Transverse colon (tissue), 4 donors: ENCODE measurements at regions of chr12 and their contacts with region 1.

Region 1: DNA sequence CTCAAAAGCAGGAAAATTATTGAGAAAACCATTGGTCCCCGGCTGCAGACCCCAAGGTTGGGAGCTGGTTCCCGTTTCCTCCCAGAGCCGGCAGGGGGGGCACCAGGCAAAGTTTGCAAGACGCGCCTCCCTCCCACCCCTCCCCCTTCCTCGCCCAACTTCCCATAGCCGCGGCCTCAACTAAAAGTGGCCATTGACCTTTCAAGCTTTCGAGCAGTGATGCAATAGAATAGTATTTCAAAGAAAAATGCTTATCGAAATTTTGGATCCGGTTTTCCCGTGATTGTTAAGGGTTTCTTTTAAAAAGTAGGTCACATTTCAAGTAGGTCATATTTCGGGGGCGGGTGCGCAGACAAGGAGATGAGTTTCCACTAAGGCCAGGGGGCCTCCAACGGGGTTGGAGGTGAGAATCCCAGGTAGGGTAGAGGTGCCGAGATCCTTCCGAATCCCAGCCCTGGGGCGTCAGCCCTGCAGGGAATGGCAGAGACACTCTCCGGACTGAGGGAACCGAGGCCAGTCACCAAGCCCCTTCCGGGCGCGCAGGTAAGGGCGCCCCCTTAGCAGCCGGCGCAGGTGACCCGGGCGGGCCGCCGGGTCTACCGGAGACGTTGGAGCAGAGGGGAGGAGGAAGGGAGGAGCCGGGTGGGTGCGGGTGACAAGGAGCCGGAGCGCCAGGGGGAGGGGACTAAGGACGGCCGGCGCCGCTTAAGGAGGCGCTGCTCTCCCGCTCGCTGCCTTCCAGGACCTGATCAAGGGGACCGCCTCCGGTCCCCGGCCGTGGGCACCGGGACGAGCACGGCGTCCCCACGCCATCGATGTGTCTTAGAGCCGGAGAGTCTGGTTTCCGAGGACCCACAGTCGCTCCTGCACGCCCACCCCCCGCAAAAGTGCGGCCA is 2.6 kb upstream of the SOCS2 start:
- DNase-seq: peak; percentile 90
- H3K4me3 ChIP-seq: peak overlapping the region; percentile 58 to 92 (median 85)
- H3K27ac ChIP-seq: peak overlapping the region; percentile 93 to 98 (median 97)
- H3K4me1 ChIP-seq: peaks cover 0 to 33% (median 21%) of the 10 kb centered on the region in 4 donors
- H3K27me3 ChIP-seq: no peaks in the 10 kb centered on the region
- CTCF ChIP-seq: peak; percentile 75 to 86 (median 80)
- EP300 ChIP-seq: no peak
- POLR2A ChIP-seq: no peak

Region 2: DNA sequence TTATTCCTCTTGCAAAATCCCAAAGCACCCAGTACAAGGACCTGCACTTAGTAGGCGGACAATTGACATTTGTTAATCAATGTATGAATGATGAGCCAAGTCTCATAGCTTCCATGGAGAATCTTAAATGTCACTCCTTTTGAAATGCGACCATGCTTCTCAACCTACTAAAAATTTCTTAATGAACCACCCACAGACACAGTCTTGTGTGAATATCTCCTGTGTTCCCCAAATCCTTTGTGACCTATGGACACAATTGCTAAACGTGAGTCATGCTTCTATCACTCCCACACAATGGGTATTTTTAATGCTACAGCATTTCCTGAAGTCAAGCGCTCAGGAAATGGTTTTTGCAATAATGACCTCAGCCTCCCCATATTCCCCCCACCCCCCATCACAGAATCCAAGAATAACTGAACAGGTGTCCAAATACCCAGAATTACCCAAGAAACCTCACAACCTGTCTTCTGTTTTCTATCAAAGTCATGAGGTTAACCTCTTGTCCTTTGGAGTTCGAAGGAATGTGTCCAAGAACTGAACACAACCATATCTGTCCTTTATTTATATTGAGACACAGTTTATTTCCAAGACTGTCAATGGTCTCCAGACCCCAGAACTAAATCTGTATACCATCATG is 1030.7 kb before region 1 on chr12:
- in situ Hi-C with region 1: no loop called
- intact Hi-C with region 1: no loop called
- DNase-seq: no peak
- H3K4me3 ChIP-seq: no peak overlapping the region
- H3K27ac ChIP-seq: peak overlapping the region; percentile 9 to 56 (median 32)
- H3K4me1 ChIP-seq: peaks cover 28 to 42% (median 30%) of the 10 kb centered on the region in 4 donors
- H3K27me3 ChIP-seq: no peaks in the 10 kb centered on the region
- CTCF ChIP-seq: no peak
- EP300 ChIP-seq: no peak
- POLR2A ChIP-seq: no peak

Region 3: GRCh38 chr12:93677195-93678064 is 107.5 kb after region 1 on chr12 and contains the start of gene CRADD:
- in situ Hi-C with region 1: loop called in 1 of 4 experiments (anchors 10 kb)
- intact Hi-C with region 1: loop called (anchors 10 kb)
- DNase-seq: peak; percentile 82
- H3K4me3 ChIP-seq: peak within 1 kb of the TSS; percentile 56 to 80 (median 64)
- H3K27ac ChIP-seq: peak within 1 kb of the TSS; percentile 94 to 99 (median 96)
- H3K4me1 ChIP-seq: peaks cover 4 to 22% (median 12%) of the 10 kb centered on the region in 4 donors
- H3K27me3 ChIP-seq: peaks cover 5% of the 10 kb centered on the region
- CTCF ChIP-seq: peak in 2 of 5 experiments; percentile 22 to 32
- EP300 ChIP-seq: peak; percentile 8
- POLR2A ChIP-seq: peak; percentile 79
- total RNA-seq, gene CRADD: 45.6 to 59.3 (median 56.3) TPM

Region 4: GRCh38 chr12:93813972-93814821 is 244.3 kb after region 1 on chr12:
- in situ Hi-C with region 1: no loop called
- intact Hi-C with region 1: loop called (anchors 5 kb)
- DNase-seq: peak; percentile 59
- H3K4me3 ChIP-seq: no peak overlapping the region
- H3K27ac ChIP-seq: peak overlapping the region; percentile 76 to 86 (median 80)
- H3K4me1 ChIP-seq: peaks cover 9 to 31% (median 15%) of the 10 kb centered on the region in 4 donors
- H3K27me3 ChIP-seq: no peaks in the 10 kb centered on the region
- CTCF ChIP-seq: peak in 1 of 5 experiments; percentile 9
- EP300 ChIP-seq: peak; percentile 87
- POLR2A ChIP-seq: no peak

Region 5: GRCh38 chr12:94074980-94075928 is 505.4 kb after region 1 on chr12:
- in situ Hi-C with region 1: no loop called
- intact Hi-C with region 1: loop called (anchors 10 kb)
- DNase-seq: peak; percentile 35
- H3K4me3 ChIP-seq: no peak overlapping the region
- H3K27ac ChIP-seq: peak overlapping the region; percentile 56 to 69 (median 64)
- H3K4me1 ChIP-seq: peaks cover 8 to 43% (median 20%) of the 10 kb centered on the region in 4 donors
- H3K27me3 ChIP-seq: no peaks in the 10 kb centered on the region
- CTCF ChIP-seq: peak; percentile 49 to 61 (median 50)
- EP300 ChIP-seq: no peak
- POLR2A ChIP-seq: no peak

Region 6: DNA sequence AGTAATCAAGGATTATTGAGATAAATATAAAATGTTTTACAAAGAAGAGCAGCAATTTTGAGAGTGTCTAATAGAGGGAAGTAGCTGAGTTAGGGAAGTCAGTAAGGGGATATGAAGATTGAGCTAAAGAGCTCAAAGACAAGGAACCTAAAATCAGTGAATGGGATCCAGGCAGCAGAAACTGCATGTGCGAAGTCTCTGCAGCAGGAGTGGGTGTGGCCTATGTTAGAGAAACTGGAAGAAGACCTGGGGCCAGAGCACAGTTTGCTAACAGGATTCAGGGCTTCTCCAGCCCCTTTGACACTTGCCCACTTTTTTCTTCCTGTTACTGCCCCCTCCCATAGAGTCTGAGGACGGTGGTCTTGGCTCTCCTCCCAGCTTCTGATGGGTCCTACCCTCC is 542.2 kb after region 1 on chr12:
- in situ Hi-C with region 1: no loop called
- intact Hi-C with region 1: no loop called
- DNase-seq: no peak
- H3K4me3 ChIP-seq: no peak overlapping the region
- H3K27ac ChIP-seq: no peak overlapping the region
- H3K4me1 ChIP-seq: no peaks in the 10 kb centered on the region
- H3K27me3 ChIP-seq: no peaks in the 10 kb centered on the region
- CTCF ChIP-seq: no peak
- EP300 ChIP-seq: no peak
- POLR2A ChIP-seq: no peak